CD4-positive, alpha-beta T cell (primary cell): ENCODE measurements at regions of chr6 and their contacts with region 1.

Region 1: DNA sequence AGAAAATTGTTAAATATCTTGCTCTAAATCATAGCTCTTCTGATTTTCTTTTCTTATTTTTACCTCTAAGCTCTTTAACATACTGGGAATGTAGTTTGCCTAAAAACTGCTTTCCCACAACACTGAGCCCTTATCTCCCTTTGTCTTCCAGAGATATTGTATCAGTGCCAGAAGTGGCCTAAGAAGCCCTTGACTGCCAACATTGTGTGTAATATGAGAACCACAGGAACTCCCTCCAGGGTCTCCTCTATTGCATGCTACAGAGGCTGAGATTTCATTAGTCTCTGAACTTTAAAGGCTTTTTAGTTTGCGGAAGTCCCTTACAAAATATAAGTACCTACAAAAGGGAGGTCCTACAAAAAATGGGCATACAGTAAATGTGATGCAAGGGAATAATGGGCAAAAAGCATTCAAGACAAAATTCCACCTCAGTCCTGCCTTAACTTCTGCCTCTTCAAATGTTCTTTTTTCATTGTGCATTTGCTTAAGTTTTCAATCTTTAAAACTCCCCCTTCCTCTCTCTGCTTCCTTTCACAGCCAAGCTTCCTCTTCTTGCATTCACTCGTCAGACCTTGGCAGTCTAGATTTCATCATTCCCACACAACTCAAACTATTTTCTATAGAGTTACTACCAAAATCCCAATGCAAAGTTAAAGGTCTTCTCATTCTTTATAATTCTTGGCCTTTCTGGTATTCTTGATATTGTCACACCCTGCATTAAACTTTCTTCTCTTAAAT is 76.5 kb downstream of the ADGRG6 start:
- DNase-seq: no peak
- ATAC-seq: no peak
- H3K4me3 ChIP-seq: no peak overlapping the region
- H3K4me3 Mint-ChIP-seq: no peak overlapping the region
- H3K27ac ChIP-seq: no peak overlapping the region
- H3K27ac Mint-ChIP-seq: no peak overlapping the region
- H3K4me1 ChIP-seq: no peaks in the 10 kb centered on the region
- H3K4me1 Mint-ChIP-seq: no peaks in the 10 kb centered on the region
- H3K27me3 ChIP-seq: no peaks in the 10 kb centered on the region
- H3K27me3 Mint-ChIP-seq: peaks cover 3% of the 10 kb centered on the region
- CTCF ChIP-seq: no peak

Region 2: GRCh38 chr6:141252828-141253608 is 1125.3 kb before region 1 on chr6:
- CTCF ChIA-PET with region 1: no interaction called
- POLR2A ChIA-PET with region 1: no interaction called
- intact Hi-C with region 1: loop called in 1 of 2 experiments (anchors 10 kb)
- DNase-seq: no peak
- ATAC-seq: no peak
- H3K4me3 ChIP-seq: no peak overlapping the region
- H3K4me3 Mint-ChIP-seq: no peak overlapping the region
- H3K27ac ChIP-seq: no peak overlapping the region
- H3K27ac Mint-ChIP-seq: no peak overlapping the region
- H3K4me1 ChIP-seq: no peaks in the 10 kb centered on the region
- H3K4me1 Mint-ChIP-seq: no peaks in the 10 kb centered on the region
- H3K27me3 ChIP-seq: no peaks in the 10 kb centered on the region
- H3K27me3 Mint-ChIP-seq: no peaks in the 10 kb centered on the region
- CTCF ChIP-seq: no peak

Region 3: GRCh38 chr6:141326426-141326825 is 1051.9 kb before region 1 on chr6:
- CTCF ChIA-PET with region 1: no interaction called
- POLR2A ChIA-PET with region 1: no interaction called
- intact Hi-C with region 1: no loop called
- DNase-seq: peak in 11 of 14 experiments; percentile 1 to 67 (median 15)
- ATAC-seq: peak; percentile 92
- H3K4me3 ChIP-seq: peak overlapping the region; percentile 17
- H3K4me3 Mint-ChIP-seq: no peak overlapping the region
- H3K27ac ChIP-seq: no peak overlapping the region
- H3K27ac Mint-ChIP-seq: no peak overlapping the region
- H3K4me1 ChIP-seq: no peaks in the 10 kb centered on the region
- H3K4me1 Mint-ChIP-seq: no peaks in the 10 kb centered on the region
- H3K27me3 ChIP-seq: no peaks in the 10 kb centered on the region
- H3K27me3 Mint-ChIP-seq: no peaks in the 10 kb centered on the region
- CTCF ChIP-seq: no peak

Region 4: DNA sequence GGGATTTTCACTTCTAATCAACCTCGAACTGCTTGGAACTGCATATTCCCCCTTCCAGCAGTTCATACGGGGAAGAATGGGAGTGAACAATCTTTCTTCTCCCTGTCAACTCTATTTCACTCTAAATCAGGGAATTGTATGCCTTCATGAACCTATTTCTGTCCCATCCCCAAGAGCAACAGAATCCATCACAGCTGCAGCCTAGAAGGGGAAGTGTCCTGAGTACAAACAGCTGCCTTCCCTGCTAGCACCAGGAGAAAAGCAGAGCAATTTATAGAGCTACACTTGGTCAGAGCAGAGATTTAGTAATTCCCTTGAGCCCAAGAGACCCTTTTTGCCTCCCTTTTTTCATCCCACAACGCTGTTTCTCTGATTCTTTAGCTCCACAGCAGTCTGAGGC is 131.9 kb after region 1 on chr6:
- CTCF ChIA-PET with region 1: no interaction called
- POLR2A ChIA-PET with region 1: no interaction called
- intact Hi-C with region 1: no loop called
- DNase-seq: no peak
- ATAC-seq: no peak
- H3K4me3 ChIP-seq: no peak overlapping the region
- H3K4me3 Mint-ChIP-seq: no peak overlapping the region
- H3K27ac ChIP-seq: no peak overlapping the region
- H3K27ac Mint-ChIP-seq: no peak overlapping the region
- H3K4me1 ChIP-seq: no peaks in the 10 kb centered on the region
- H3K4me1 Mint-ChIP-seq: no peaks in the 10 kb centered on the region
- H3K27me3 ChIP-seq: no peaks in the 10 kb centered on the region
- H3K27me3 Mint-ChIP-seq: no peaks in the 10 kb centered on the region
- CTCF ChIP-seq: no peak